ENCODE measurements at regions of chr16 and their contacts with region 1.

Region 1: GRCh38 chr16:12455287-12455798 is 348.3 kb downstream of the CPPED1 start:
- DNase-seq: no peak
- H3K4me3 ChIP-seq: no peak overlapping the region
- CTCF ChIP-seq: peak in 1 of 3 donors; percentile 32
- POLR2A ChIP-seq: no peak

Region 2: DNA sequence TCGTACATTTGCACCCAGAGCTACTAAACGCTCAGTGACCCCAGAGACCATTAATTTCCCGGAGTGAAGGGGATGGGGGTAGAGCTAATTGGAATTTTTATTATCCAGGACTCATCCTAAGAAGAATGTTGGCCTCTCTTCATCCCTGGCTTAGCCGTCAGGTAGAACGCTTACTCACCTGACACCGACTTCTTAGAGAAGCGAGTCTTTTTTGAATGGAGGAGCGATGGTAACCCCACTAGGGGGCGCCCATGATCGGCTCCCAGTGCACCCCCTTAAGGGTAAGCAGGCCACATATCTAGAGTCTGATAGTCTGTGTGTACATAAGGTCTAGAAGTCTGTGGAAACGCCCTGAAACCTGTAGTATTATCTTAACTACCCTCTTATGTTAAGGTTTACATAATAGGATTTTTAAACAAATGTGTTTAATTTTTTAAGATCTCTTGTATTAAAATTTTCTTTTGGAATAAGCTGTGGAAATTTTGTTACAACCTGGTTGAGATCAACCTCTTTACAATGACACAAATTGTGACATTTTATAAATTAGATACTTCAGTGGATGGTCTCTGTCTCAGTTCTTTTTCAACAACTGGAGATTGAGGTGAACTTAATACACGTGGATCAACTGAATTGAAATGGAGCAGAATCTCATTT is 118.5 kb after region 1 on chr16:
- intact Hi-C with region 1: loop called (anchors 10 kb)
- DNase-seq: peak in 1 of 2 donors; percentile 88
- H3K4me3 ChIP-seq: no peak overlapping the region
- CTCF ChIP-seq: no peak
- POLR2A ChIP-seq: no peak

Region 3: GRCh38 chr16:12685806-12686205 is 230.5 kb after region 1 on chr16:
- intact Hi-C with region 1: no loop called
- DNase-seq: no peak
- H3K4me3 ChIP-seq: no peak overlapping the region
- CTCF ChIP-seq: no peak
- POLR2A ChIP-seq: no peak

Region 4: GRCh38 chr16:13130586-13130985 is 675.2 kb after region 1 on chr16:
- intact Hi-C with region 1: no loop called
- DNase-seq: no peak
- H3K4me3 ChIP-seq: no peak overlapping the region
- CTCF ChIP-seq: no peak
- POLR2A ChIP-seq: no peak